Left colon (tissue), 2 donors: ENCODE measurements at regions of chr18 and their contacts with region 1.

Region 1: GRCh38 chr18:48777026-48777743 is 173.6 kb downstream of the SMAD7 start:
- DNase-seq: peak in 1 of 2 donors; percentile 76
- ATAC-seq: peak; percentile 80

Region 2: DNA sequence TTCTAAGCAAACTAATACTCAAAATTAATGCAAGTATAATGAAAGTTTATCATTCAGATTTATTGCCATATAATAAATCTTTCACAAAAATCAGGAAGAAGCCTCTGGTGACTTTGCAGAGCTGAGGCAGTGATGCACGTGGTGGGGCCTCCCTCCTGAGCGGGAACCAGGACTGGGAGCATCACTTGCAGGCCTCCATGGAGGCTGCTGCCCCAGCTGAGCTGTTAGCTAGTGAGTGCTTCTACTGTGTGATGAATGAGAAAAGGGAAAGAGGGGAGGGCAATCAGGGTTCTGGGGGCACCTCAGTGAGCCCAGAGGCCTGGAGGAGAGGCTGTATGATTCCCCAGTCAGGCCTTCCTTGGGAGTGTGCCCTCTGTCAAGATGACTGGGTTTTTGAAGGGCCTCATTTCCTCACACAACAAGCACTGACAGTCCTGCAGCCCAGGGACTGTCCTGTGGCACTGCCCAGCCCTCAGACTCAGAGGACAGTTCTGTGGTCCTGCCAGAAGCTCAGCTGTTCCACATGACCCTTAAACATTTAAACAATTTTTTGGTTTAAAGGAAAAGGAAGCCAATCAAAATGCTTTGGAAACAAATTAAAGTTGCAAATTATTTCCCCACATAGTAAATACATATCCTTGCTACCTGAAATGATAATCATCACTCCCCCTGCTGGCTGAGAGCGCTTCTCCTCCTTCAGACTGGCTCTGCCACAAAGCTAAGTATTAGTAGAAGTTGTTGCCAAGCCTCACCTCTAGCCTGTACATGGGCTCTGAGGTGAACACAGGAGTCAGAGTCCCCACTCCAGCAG is 264.5 kb after region 1 on chr18:
- intact Hi-C with region 1: loop called in 1 of 2 experiments (anchors 10 kb)
- DNase-seq: peak in 1 of 2 donors; percentile 77
- ATAC-seq: peak; percentile 79

Region 3: GRCh38 chr18:49081511-49082155 is 304.4 kb after region 1 on chr18:
- intact Hi-C with region 1: no loop called
- DNase-seq: no peak
- ATAC-seq: no peak